ENCODE measurements at regions of chr14 and their contacts with region 1.

Region 1: DNA sequence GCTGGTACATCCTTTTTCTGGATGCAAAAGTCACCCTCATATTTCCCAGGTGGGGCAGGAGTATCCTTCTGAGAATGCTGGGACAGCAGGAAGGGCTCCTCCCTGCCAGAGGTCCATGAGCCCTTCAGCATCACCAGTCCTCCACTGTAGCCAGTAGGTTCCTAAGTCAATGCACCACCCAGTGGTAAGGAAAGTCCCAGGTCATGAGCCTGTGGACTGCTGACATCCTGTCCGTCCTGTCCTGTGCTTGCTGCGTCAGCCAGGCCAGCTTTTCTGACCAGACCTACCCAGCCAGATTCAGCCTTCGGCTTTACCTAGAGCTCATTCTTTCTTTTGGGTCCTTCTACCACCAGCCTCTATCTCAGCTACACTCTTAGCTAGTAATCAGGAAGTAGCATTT is 23.0 kb upstream of the ACTN1 start:
- DNase-seq: peak; percentile 51
- ATAC-seq: peak; percentile 92

Region 2: GRCh38 chr14:68703093-68703492 is 299.0 kb before region 1 on chr14:
- intact Hi-C with region 1: no loop called
- DNase-seq: no peak
- ATAC-seq: no peak

Region 3: GRCh38 chr14:68911594-68912227 is 90.4 kb before region 1 on chr14:
- intact Hi-C with region 1: loop called (anchors 5 kb)
- DNase-seq: peak; percentile 77
- ATAC-seq: peak; percentile 93

Region 4: GRCh38 chr14:69037790-69038454 is 35.9 kb after region 1 on chr14:
- intact Hi-C with region 1: no loop called
- DNase-seq: no peak
- ATAC-seq: no peak